ENCODE measurements at regions of chr1 and their contacts with region 1.

Region 1: DNA sequence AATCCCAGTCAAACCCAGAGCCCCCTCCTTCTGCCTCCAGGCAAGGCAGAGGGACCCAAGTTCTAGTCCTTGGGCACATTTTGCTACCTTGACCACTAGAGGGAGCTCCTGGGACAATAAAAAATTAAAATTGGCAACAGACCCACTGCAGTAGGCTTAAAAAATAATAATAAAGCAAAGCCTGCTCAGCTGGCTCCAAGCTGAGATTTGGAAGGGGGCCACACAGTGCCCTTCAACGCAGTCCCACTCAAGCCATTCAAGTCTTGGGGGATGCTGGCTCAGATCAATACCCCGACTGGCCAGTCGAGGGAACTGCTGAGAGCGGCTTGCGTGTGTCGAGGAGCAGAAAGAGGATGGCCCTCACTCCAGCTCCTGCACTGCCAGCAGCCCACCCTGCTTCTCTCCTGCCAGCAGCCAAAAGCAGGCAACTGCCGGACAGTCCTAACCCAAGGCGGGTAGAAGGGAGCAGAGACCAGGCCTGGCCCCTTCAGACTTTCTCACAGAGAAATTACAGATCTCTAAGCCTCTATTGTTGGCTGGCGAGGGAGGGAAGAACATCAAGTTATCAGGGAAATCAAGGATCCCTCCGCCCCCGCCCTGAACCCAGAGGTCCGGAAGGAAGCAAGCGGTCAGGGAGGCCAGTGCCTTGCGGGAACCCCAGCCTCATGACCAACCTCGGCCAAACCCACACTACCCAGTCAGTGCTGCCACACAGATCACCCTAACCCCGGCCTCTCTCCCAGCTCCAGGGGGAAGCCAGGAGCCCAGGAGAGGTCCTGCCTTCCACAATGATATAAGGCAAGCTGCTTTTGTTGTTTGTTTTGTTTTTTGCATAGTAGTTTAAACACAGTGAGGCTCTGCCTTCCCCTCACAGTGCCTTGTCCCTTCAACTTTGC is 4.9 kb upstream of the ALDH4A1 start:
- DNase-seq: peak; percentile 77
- ATAC-seq: peak; percentile 6 to 33

Region 2: GRCh38 chr1:18875107-18875795 is 32.0 kb before region 1 on chr1:
- intact Hi-C with region 1: no loop called
- DNase-seq: peak; percentile 82
- ATAC-seq: peak; percentile 74 to 79

Region 3: DNA sequence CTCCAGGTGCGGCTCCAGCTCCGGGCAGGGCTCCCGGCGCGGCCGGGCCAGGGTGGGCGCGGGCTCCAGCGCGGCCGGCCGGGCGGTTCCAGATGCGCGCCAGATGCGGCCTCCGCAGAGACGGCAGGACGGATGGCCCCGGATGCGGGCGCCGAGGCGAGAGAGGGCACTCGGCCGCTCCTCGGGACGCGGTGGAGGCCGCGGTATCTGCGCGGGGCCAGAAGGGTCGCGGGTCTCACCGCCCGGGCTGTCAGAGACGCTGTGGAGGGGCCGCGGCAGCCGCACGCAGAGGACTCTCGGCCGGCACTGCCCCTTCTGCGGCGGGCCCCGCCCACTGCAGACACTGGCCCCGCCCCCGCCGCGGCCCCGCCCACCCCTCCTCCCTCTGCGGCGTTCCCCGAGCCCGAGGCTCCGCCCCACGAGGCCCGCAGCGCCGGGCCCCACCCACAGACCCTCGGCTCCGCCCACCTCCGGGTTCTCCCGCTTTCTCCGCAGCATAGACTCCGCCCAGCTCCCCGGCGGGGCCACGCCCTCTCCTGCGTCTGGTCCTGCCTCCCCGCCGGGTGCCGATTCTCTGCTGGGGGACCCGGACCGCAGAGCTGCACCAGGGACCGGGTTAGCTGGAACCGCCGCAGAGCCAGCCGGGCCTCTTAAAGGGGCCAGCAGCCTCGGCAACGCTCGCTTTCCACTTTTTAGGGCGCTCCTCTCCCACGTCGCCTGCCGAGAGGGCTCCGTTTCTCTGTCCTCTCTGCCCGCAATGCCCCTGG is 49.3 kb after region 1 on chr1 and contains the start of gene IFFO2:
- intact Hi-C with region 1: loop called in 1 of 2 experiments (anchors 5 kb)
- DNase-seq: peak; percentile 98
- ATAC-seq: peak; percentile 98
- total RNA-seq, gene IFFO2: 3.4 to 6.4 TPM

Region 4: GRCh38 chr1:19074902-19075721 is 167.8 kb after region 1 on chr1:
- intact Hi-C with region 1: loop called in 1 of 2 experiments (anchors 5 kb)
- DNase-seq: peak; percentile 48
- ATAC-seq: peak; percentile 63 to 68

Region 5: GRCh38 chr1:19087737-19088594 is 180.7 kb after region 1 on chr1:
- intact Hi-C with region 1: loop called in 1 of 2 experiments (anchors 5 kb)
- DNase-seq: no peak
- ATAC-seq: no peak

Measured in left cardiac atrium (tissue), 4 donors.